Body of pancreas (tissue), 4 donors: ENCODE measurements at regions of chr9 and their contacts with region 1.

Region 1: DNA sequence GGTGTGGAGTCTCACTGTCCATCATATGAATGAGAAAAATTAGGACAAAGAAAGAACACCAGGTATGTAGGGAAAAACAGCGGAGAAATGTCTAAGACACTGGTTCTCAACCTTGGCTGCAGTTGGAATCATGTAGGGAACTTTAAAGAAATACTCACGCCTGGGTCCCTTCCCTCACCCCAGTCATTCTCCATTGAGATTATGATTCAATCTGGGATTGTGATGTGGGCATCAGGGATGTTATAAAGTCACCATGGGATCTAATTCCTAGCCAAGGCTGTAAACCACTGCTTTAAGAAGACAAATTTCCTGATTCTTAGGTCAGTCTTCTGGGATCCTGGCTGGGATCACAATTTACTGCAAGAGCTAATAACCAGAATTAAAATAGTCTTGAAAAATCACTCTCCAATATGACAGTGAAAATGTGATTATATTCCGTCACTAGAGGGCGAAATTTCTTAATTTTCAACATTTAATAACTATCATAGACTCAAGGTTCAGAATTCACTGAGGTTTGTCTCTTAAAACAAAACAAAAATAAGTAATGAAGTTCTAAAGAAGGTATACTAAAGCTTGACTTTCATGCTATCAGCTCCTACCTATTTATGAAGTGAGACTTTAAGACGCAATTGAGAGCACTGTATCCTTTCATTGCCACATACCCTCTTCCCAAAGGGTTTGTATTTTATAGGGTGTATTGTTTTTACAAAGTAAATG is 60.5 kb downstream of the GLDC start:
- DNase-seq: no peak
- ATAC-seq: no peak
- H3K4me3 ChIP-seq: no peak overlapping the region
- H3K27ac ChIP-seq: no peak overlapping the region
- H3K4me1 ChIP-seq: no peaks in the 10 kb centered on the region
- H3K27me3 ChIP-seq: no peaks in the 10 kb centered on the region
- CTCF ChIP-seq: peak in 6 of 7 experiments; percentile 39 to 59 (median 50)
- POLR2A ChIP-seq: no peak

Region 2: DNA sequence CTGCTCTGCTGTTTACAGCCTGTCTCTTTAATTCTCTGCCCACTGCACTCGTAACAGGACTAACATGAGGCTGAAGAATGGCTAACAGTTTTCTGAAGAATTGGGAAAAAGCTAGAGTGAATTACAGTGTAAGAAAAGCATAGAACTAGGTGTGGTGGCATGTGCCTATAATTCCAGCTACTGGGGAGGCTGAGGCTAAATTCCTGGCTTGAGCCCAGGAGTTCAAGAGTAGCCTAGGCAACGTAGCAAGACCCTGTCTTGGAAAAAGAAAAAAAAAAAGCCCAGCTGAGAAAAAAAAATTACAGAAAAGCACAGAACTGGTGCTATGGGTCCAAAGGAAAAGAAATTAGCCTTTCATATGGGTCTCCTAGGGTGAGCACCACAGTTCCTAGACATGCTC is 186.0 kb before region 1 on chr9:
- intact Hi-C with region 1: no loop called
- DNase-seq: no peak
- ATAC-seq: no peak
- H3K4me3 ChIP-seq: no peak overlapping the region
- H3K27ac ChIP-seq: no peak overlapping the region
- H3K4me1 ChIP-seq: no peaks in the 10 kb centered on the region
- H3K27me3 ChIP-seq: no peaks in the 10 kb centered on the region
- CTCF ChIP-seq: no peak
- POLR2A ChIP-seq: no peak

Region 3: GRCh38 chr9:6667633-6668280 is 82.7 kb after region 1 on chr9:
- intact Hi-C with region 1: loop called (anchors 10 kb)
- DNase-seq: no peak
- ATAC-seq: no peak
- H3K4me3 ChIP-seq: no peak overlapping the region
- H3K27ac ChIP-seq: no peak overlapping the region
- H3K4me1 ChIP-seq: peaks cover 12% of the 10 kb centered on the region
- H3K27me3 ChIP-seq: no peaks in the 10 kb centered on the region
- CTCF ChIP-seq: peak; percentile 40 to 58 (median 53)
- POLR2A ChIP-seq: no peak

Region 4: GRCh38 chr9:6739218-6739617 is 154.2 kb after region 1 on chr9:
- intact Hi-C with region 1: loop called (anchors 10 kb)
- DNase-seq: no peak
- ATAC-seq: no peak
- H3K4me3 ChIP-seq: no peak overlapping the region
- H3K27ac ChIP-seq: no peak overlapping the region
- H3K4me1 ChIP-seq: no peaks in the 10 kb centered on the region
- H3K27me3 ChIP-seq: no peaks in the 10 kb centered on the region
- CTCF ChIP-seq: peak in 6 of 7 experiments; percentile 11 to 51 (median 37)
- POLR2A ChIP-seq: no peak

Region 5: DNA sequence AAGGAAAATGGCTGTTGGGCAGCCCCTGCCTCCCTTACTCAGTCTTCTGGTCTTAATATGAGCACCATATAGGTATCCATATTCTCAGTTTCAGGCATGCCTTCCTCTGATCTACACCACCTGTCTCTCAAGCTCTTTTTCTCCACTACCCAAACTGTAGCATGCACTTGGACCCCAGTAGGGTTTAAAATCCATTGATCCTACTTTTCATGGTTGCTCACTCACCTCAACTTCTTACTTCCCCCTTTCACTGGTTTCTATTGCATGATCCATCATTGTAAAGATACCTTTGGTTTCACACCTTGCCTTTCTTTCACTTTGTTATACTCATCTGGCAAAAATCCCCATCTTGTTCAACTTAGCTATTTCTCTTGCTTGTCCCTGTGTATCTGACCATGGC is 332.1 kb after region 1 on chr9:
- intact Hi-C with region 1: no loop called
- DNase-seq: no peak
- ATAC-seq: no peak
- H3K4me3 ChIP-seq: no peak overlapping the region
- H3K27ac ChIP-seq: no peak overlapping the region
- H3K4me1 ChIP-seq: peaks cover 4% of the 10 kb centered on the region
- H3K27me3 ChIP-seq: no peaks in the 10 kb centered on the region
- CTCF ChIP-seq: no peak
- POLR2A ChIP-seq: no peak